GM12878 (cell line): ENCODE measurements at regions of chr4 and their contacts with region 1.

Region 1: GRCh38 chr4:36587909-36588472 is 306.6 kb downstream of the DTHD1 start:
- DNase-seq: no peak
- ATAC-seq: peak; percentile 16; the same call in 2 of the 3 replicates
- H3K4me3 ChIP-seq: no peak overlapping the region
- H3K27ac ChIP-seq: no peak overlapping the region
- H3K4me1 ChIP-seq: no peaks in the 10 kb centered on the region
- H3K27me3 ChIP-seq: no peaks in the 10 kb centered on the region
- CTCF ChIP-seq: no peak
- EP300 ChIP-seq: no peak
- POLR2A ChIP-seq: no peak
- RAD21 ChIP-seq: no peak

Region 2: GRCh38 chr4:35697210-35697736 is 890.7 kb before region 1 on chr4:
- CTCF ChIA-PET with region 1: no interaction called
- POLR2A ChIA-PET with region 1: no interaction called
- RAD21 ChIA-PET with region 1: no interaction called
- SMC1A ChIA-PET with region 1: no interaction called
- in situ Hi-C with region 1: no loop called
- intact Hi-C with region 1: no loop called
- DNase-seq: peak; percentile 26
- ATAC-seq: peak; percentile 94
- H3K4me3 ChIP-seq: no peak overlapping the region
- H3K27ac ChIP-seq: no peak overlapping the region
- H3K4me1 ChIP-seq: no peaks in the 10 kb centered on the region
- H3K27me3 ChIP-seq: no peaks in the 10 kb centered on the region
- CTCF ChIP-seq: no peak
- EP300 ChIP-seq: no peak
- POLR2A ChIP-seq: no peak
- RAD21 ChIP-seq: no peak

Region 3: GRCh38 chr4:36618102-36618501 is 30.1 kb after region 1 on chr4:
- CTCF ChIA-PET with region 1: no interaction called
- POLR2A ChIA-PET with region 1: no interaction called
- RAD21 ChIA-PET with region 1: no interaction called
- SMC1A ChIA-PET with region 1: no interaction called
- in situ Hi-C with region 1: no loop called
- intact Hi-C with region 1: loop called (anchors 2 kb)
- DNase-seq: no peak
- ATAC-seq: no peak
- H3K4me3 ChIP-seq: no peak overlapping the region
- H3K27ac ChIP-seq: no peak overlapping the region
- H3K4me1 ChIP-seq: no peaks in the 10 kb centered on the region
- H3K27me3 ChIP-seq: no peaks in the 10 kb centered on the region
- CTCF ChIP-seq: no peak
- EP300 ChIP-seq: no peak
- POLR2A ChIP-seq: no peak
- RAD21 ChIP-seq: no peak